Psoas muscle (tissue), 8 donors: ENCODE measurements at regions of chr5 and their contacts with region 1.

Region 1: DNA sequence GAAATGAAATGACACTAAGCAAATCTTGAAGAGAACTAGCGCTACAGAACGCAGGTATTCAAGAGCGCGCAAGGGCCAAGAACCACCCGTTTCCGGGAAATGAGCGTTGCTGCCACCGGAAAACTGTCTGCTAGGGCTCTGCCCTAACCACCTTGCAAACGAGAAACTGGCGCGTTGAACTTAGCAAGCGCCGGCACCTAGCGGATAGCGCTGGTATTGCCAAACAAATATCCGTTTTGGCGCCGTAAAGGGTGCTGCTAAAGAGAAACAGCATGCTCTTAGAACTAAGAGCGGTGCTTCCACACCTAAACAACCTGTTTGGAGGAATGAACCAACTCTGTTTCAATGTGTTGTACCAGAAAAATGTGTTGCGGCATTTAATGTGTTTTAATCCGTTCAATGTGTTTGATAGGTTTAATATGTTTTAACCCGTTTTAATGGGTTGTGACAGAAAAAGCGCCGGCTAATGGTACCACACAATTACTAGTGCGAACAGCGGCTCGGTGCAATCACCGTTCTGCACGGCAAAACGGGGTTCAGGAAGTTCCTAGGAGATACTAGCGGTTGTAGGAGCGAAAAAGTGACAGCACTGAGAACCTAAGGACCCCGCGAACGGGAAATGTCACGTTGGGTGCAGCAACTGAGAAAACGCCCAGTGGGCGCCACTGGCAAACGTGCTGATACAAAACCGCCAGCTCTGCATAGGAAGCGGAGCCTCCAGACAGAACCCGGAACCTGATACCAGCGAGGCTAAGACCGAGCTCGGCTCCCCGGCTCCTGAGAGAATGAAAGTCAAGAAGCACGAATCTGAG is at the start of gene ANXA2R:
- DNase-seq: peak; percentile 85 to 92
- ATAC-seq: peak; percentile 62 to 69 (median 67)
- H3K4me3 ChIP-seq: peak within 1 kb of the TSS; percentile 75
- H3K27ac ChIP-seq: peak within 1 kb of the TSS; percentile 96
- H3K4me1 ChIP-seq: peaks cover 31% of the 10 kb centered on the region
- H3K27me3 ChIP-seq: no peaks in the 10 kb centered on the region
- CTCF ChIP-seq: peak; percentile 87
- total RNA-seq, gene ANXA2R: 0.46 to 1.6 (median 0.78) TPM

Region 2: GRCh38 chr5:42908509-42909488 is 131.7 kb before region 1 on chr5:
- intact Hi-C with region 1: loop called in 1 of 2 experiments (anchors 2 kb)
- DNase-seq: peak; percentile 87 to 92
- ATAC-seq: peak; percentile 91 to 99 (median 96)
- H3K4me3 ChIP-seq: peak overlapping the region; percentile 72
- H3K27ac ChIP-seq: no peak overlapping the region
- H3K4me1 ChIP-seq: no peaks in the 10 kb centered on the region
- H3K27me3 ChIP-seq: no peaks in the 10 kb centered on the region
- CTCF ChIP-seq: peak; percentile 78

Region 3: DNA sequence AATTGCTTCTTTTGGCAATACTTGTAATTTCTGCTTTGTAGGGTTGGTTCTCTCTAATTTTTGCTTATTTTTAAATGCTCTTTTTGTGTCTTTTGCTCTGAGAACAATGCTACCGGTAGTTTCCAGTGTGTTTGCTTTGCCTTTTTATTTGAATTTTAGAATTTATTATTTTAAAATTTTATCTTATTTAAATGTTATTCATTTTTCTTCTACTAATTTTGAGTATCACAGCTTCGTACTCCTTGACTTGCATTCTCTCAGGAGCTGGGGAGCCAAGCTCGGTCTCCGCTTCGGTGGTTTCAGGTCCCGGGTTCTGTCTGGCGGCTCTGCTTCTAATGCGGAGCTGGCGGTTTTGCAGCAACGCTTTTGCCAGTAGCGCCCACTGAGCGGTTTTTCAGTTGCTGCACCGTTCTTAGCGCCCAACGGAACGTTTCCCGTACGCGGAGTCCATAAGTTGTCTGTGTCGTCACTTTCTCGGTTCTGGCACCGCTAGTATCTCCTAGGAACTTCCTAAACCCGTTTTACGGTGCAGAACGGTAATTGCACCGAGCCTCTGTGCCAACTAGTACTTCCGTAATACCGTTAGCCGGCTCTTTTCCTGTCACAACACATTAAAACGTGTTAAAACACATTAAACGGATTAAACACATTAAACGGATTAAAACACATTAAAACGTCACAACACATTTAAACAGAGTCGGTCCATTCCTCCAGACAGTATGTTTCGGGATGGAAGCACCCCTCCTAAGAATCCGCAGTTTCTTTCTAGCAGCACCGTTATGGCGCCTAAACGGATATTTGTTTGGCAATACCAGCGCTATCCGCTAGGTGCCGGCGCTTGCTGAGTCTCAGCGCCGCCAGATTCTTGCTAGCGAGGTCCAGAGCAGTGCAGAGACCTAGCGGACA is 46.0 kb before region 1 on chr5:
- intact Hi-C with region 1: loop called in 1 of 2 experiments (anchors 2 kb)
- DNase-seq: peak; percentile 86 to 91
- ATAC-seq: peak; percentile 82 to 88 (median 84)
- H3K4me3 ChIP-seq: peak overlapping the region; percentile 73
- H3K27ac ChIP-seq: peak overlapping the region; percentile 86
- H3K4me1 ChIP-seq: peaks cover 11% of the 10 kb centered on the region
- H3K27me3 ChIP-seq: peaks cover 6 to 79% (median 53%) of the 10 kb centered on the region in 3 donors
- CTCF ChIP-seq: peak; percentile 87

Region 4: DNA sequence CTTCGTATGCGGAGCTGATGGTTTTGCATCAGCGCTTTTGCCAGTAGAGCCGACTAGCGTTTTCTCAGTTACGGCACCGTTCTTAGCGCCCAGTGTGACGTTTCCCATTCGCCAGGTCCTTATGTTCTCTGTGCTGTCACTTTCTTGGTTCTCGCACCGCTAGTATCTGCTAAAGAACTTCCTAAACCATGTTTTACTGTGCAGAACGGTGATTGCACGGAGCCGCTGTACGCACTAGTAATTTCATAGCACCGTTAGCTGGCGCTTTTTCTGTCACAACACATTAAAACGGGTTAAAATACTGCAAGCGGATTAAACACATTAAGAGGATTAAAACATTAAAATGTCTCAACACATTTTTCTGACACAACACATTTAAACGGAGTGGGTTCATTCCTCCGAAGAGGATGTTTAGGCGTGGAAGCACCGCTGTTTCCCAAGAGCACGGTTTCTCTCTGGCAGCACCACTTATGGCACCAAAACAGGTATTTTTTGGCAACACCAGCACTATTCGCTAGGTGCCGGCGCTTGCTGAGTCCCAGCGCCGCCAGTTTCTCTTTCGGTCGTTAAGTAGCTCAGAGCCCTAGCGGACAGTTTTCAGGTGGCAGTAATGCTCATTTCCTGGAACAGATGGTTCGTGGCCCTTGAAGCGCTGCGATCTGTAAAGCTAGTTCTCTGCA is 20.7 kb before region 1 on chr5:
- intact Hi-C with region 1: loop called in 1 of 2 experiments (anchors 1 kb)
- DNase-seq: peak; percentile 61 to 78
- ATAC-seq: peak; percentile 53 to 70 (median 64)
- H3K4me3 ChIP-seq: peak overlapping the region; percentile 78
- H3K27ac ChIP-seq: peak overlapping the region; percentile 96
- H3K4me1 ChIP-seq: peaks cover 23% of the 10 kb centered on the region
- H3K27me3 ChIP-seq: peaks cover 0 to 9% (median 3%) of the 10 kb centered on the region in 3 donors
- CTCF ChIP-seq: peak; percentile 47

Region 5: GRCh38 chr5:43120720-43121564 is 80.4 kb after region 1 on chr5 and contains the start of gene ZNF131:
- intact Hi-C with region 1: loop called in 1 of 2 experiments (anchors 2 kb)
- DNase-seq: peak; percentile 97 to 98
- ATAC-seq: peak; percentile 94 to 98 (median 94)
- H3K4me3 ChIP-seq: peak within 1 kb of the TSS; percentile 85
- H3K27ac ChIP-seq: peak within 1 kb of the TSS; percentile 99
- H3K4me1 ChIP-seq: peaks cover 47% of the 10 kb centered on the region
- H3K27me3 ChIP-seq: no peaks in the 10 kb centered on the region
- CTCF ChIP-seq: no peak
- total RNA-seq, gene ZNF131: 16.7 to 23.7 (median 18.7) TPM

Region 6: DNA sequence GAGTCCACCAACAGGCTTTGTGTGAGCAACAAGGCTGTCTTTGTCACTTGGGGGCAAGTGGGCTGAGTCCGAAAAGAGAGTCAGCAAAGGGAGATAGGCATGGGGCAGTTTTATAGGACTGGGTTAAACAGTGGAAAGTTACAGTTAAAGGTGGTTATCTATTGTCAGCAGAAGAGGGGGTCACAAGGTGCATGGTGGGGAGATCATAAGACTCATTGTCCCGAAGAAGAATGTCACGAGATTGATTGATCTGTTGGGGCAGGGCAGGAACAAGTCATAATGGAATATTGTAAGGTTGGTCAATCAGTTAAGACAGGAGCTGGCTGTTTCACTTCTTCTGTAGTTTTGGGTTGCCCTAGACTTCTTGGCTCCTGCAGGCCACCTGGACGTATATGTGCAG is 280.4 kb after region 1 on chr5:
- intact Hi-C with region 1: no loop called
- DNase-seq: no peak
- ATAC-seq: no peak
- H3K4me3 ChIP-seq: no peak overlapping the region
- H3K27ac ChIP-seq: no peak overlapping the region
- H3K4me1 ChIP-seq: no peaks in the 10 kb centered on the region
- H3K27me3 ChIP-seq: no peaks in the 10 kb centered on the region
- CTCF ChIP-seq: no peak